Dorsolateral prefrontal cortex (tissue), 120 donors: ENCODE measurements at regions of chrX and their contacts with region 1.

Region 1: DNA sequence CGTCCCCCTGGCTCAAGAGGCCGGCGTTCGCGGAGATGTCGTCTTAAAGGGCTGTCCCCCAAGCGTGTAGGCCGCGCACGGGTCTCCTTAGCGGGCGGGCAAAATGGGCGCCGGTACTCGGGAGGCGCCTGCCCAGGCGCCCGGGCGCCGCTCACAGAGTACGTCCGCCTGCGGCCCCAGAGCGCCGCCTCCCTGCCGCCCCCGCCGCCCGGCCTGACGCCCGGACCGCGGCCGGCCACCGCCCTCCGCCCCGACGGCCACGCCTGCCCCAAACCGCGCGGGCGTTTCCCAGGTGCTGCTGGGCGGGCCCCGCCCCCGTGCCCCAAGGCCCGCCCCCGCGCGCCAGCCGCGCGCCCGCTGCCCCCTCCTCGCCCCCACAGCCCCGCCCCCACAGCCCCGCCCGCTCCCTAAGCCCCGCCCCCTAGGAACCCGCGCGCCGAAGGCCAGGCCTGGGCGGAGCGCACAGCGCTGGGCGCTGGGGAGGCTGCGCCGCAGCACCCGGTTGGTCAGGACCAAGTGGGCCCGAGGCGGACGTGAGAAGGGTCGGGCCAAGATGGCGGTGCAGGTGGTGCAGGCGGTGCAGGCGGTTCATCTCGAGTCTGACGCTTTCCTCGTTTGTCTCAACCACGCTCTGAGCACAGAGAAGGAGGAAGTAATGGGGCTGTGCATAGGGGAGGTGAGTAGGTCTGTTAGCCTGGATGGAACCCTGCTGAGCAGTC is at the starts of genes BRCC3, CMC4 and MTCP1:
- DNase-seq: peak; percentile 57 to 83 (median 74)
- H3K4me3 ChIP-seq: peak within 1 kb of the TSS; percentile 47 to 81 (median 69)
- H3K27ac ChIP-seq: peak within 1 kb of the TSS in 57 of 59 donors; percentile 22 to 89 (median 75)
- H3K27me3 ChIP-seq: peaks cover 0 to 17% (median 0%) of the 10 kb centered on the region in 45 donors
- CTCF ChIP-seq: peak in 1 of 56 donors; percentile 24
- total RNA-seq, gene BRCC3: 11.5 to 27.6 (median 19.0) TPM
- total RNA-seq, gene CMC4: 2.1 to 11.2 (median 5.9) TPM
- total RNA-seq, gene MTCP1: 2.4 to 21.5 (median 12.1) TPM

Region 2: GRCh38 chrX:155026726-155027508 is 44.2 kb before region 1 on chrX and contains the start of gene FUNDC2:
- intact Hi-C with region 1: loop called in 1 of 2 experiments (anchors 2 kb)
- DNase-seq: peak; percentile 84 to 94 (median 92)
- H3K4me3 ChIP-seq: peak within 1 kb of the TSS; percentile 38 to 78 (median 67)
- H3K27ac ChIP-seq: peak within 1 kb of the TSS; percentile 64 to 96 (median 91)
- H3K27me3 ChIP-seq: peaks cover 0 to 10% (median 0%) of the 10 kb centered on the region in 45 donors
- CTCF ChIP-seq: peak in 9 of 56 donors; percentile 4 to 52 (median 19)
- total RNA-seq, gene FUNDC2: 44.5 to 95.0 (median 68.8) TPM